Activated B cell treated with CpG ODN at 0.5 μM for 24 hours (primary cell): ENCODE measurements at regions of chr1 and their contacts with region 1.

Region 1: GRCh38 chr1:221045842-221046831 is 166.9 kb downstream of the HLX start:
- DNase-seq: no peak
- ATAC-seq: peak; percentile 90
- H3K4me3 Mint-ChIP-seq: peak overlapping the region; percentile 77
- H3K27ac Mint-ChIP-seq: peak overlapping the region; percentile 96
- H3K4me1 Mint-ChIP-seq: peaks cover 58% of the 10 kb centered on the region
- H3K27me3 Mint-ChIP-seq: no peaks in the 10 kb centered on the region
- CTCF ChIP-seq: no peak

Region 2: GRCh38 chr1:220990427-220991339 is 55.5 kb before region 1 on chr1:
- CTCF ChIA-PET with region 1: no interaction called
- POLR2A ChIA-PET with region 1: no interaction called
- intact Hi-C with region 1: loop called (anchors 5 kb)
- DNase-seq: no peak
- ATAC-seq: no peak
- H3K4me3 Mint-ChIP-seq: no peak overlapping the region
- H3K27ac Mint-ChIP-seq: no peak overlapping the region
- H3K4me1 Mint-ChIP-seq: no peaks in the 10 kb centered on the region
- H3K27me3 Mint-ChIP-seq: peaks cover 7% of the 10 kb centered on the region
- CTCF ChIP-seq: no peak

Region 3: GRCh38 chr1:221025956-221026355 is 20.2 kb before region 1 on chr1:
- CTCF ChIA-PET with region 1: no interaction called
- POLR2A ChIA-PET with region 1: interaction called, 13 read pairs
- intact Hi-C with region 1: loop called (anchors 2 kb)
- DNase-seq: peak; percentile 24
- ATAC-seq: peak; percentile 91
- H3K4me3 Mint-ChIP-seq: peak overlapping the region; percentile 9
- H3K27ac Mint-ChIP-seq: peak overlapping the region; percentile 54
- H3K4me1 Mint-ChIP-seq: peaks cover 24% of the 10 kb centered on the region
- H3K27me3 Mint-ChIP-seq: no peaks in the 10 kb centered on the region
- CTCF ChIP-seq: no peak

Region 4: GRCh38 chr1:221284028-221284427 is 237.9 kb after region 1 on chr1:
- CTCF ChIA-PET with region 1: no interaction called
- POLR2A ChIA-PET with region 1: no interaction called
- intact Hi-C with region 1: no loop called
- DNase-seq: no peak
- ATAC-seq: no peak
- H3K4me3 Mint-ChIP-seq: no peak overlapping the region
- H3K27ac Mint-ChIP-seq: no peak overlapping the region
- H3K4me1 Mint-ChIP-seq: no peaks in the 10 kb centered on the region
- H3K27me3 Mint-ChIP-seq: peaks cover 11% of the 10 kb centered on the region
- CTCF ChIP-seq: no peak